Calu3 (cell line): ENCODE measurements at regions of chr6 and their contacts with region 1.

Region 1: DNA sequence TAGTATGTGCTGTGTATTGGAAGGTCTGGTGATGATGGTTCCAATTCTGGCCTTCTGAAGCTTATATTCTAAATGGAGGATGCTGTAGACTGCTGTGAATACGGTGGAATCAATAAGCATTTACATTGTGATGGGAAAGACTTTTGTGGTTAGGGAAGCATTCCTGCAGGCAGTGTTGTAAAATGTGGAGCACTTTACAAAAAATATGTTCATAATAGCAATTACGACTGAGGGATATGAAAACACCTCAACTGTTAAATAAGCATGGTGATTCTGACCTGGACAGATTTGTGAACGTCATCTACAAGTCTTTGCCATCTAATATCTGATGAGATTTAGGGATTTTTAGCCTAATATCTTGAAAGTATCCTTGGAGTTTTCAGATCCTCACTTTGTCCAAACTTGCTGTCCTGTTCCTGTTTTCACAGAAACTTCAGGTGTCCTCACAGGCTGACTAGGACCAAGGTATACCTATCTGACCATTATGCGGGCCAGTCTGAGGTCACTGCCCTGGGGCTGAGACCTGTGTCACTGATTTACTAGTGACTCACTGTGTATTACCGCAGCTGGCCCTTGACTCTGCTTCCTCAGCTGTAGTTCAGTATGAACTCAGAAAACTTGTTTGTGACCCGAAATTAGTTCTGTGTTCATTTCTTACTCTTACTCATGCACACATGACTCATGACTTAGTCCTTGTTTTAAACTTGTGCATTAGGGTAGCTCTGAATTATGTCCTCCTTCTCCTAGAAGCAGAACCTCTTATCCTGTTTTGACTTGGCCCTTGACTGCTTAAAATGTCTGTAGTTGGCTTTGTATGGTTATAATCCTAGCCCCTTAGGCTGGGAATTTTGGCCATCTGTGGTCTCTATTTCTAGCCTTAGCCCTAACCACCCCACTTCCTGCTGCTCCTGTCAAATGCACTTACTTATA is 343.0 kb downstream of the CDKAL1 start:
- DNase-seq: peak; percentile 95
- H3K4me3 Mint-ChIP-seq: peak overlapping the region; percentile 45
- H3K27ac Mint-ChIP-seq: peak overlapping the region; percentile 96
- H3K4me1 Mint-ChIP-seq: peaks cover 93% of the 10 kb centered on the region
- H3K27me3 Mint-ChIP-seq: no peaks in the 10 kb centered on the region
- CTCF ChIP-seq: no peak

Region 2: GRCh38 chr6:21003780-21004541 is 126.7 kb after region 1 on chr6:
- CTCF ChIA-PET with region 1: no interaction called
- intact Hi-C with region 1: loop called (anchors 5 kb)
- DNase-seq: peak; percentile 4
- H3K4me3 Mint-ChIP-seq: peak overlapping the region; percentile 3
- H3K27ac Mint-ChIP-seq: peak overlapping the region; percentile 87
- H3K4me1 Mint-ChIP-seq: peaks cover 40% of the 10 kb centered on the region
- H3K27me3 Mint-ChIP-seq: no peaks in the 10 kb centered on the region
- CTCF ChIP-seq: no peak

Region 3: GRCh38 chr6:21109391-21110178 is 232.3 kb after region 1 on chr6:
- CTCF ChIA-PET with region 1: no interaction called
- intact Hi-C with region 1: loop called (anchors 2 kb)
- DNase-seq: no peak
- H3K4me3 Mint-ChIP-seq: peak overlapping the region; percentile 7
- H3K27ac Mint-ChIP-seq: peak overlapping the region; percentile 77
- H3K4me1 Mint-ChIP-seq: peaks cover 38% of the 10 kb centered on the region
- H3K27me3 Mint-ChIP-seq: no peaks in the 10 kb centered on the region
- CTCF ChIP-seq: no peak

Region 4: GRCh38 chr6:21300439-21300838 is 423.2 kb after region 1 on chr6:
- CTCF ChIA-PET with region 1: no interaction called
- intact Hi-C with region 1: loop called (anchors 5 kb)
- DNase-seq: no peak
- H3K4me3 Mint-ChIP-seq: no peak overlapping the region
- H3K27ac Mint-ChIP-seq: no peak overlapping the region
- H3K4me1 Mint-ChIP-seq: no peaks in the 10 kb centered on the region
- H3K27me3 Mint-ChIP-seq: no peaks in the 10 kb centered on the region
- CTCF ChIP-seq: no peak

Region 5: GRCh38 chr6:21731411-21732031 is 854.2 kb after region 1 on chr6:
- CTCF ChIA-PET with region 1: no interaction called
- intact Hi-C with region 1: loop called (anchors 10 kb)
- DNase-seq: peak; percentile 74
- H3K4me3 Mint-ChIP-seq: no peak overlapping the region
- H3K27ac Mint-ChIP-seq: peak overlapping the region; percentile 22
- H3K4me1 Mint-ChIP-seq: peaks cover 62% of the 10 kb centered on the region
- H3K27me3 Mint-ChIP-seq: no peaks in the 10 kb centered on the region
- CTCF ChIP-seq: no peak